H1 (cell line): ENCODE measurements at regions of chr5 and their contacts with region 1.

Region 1: DNA sequence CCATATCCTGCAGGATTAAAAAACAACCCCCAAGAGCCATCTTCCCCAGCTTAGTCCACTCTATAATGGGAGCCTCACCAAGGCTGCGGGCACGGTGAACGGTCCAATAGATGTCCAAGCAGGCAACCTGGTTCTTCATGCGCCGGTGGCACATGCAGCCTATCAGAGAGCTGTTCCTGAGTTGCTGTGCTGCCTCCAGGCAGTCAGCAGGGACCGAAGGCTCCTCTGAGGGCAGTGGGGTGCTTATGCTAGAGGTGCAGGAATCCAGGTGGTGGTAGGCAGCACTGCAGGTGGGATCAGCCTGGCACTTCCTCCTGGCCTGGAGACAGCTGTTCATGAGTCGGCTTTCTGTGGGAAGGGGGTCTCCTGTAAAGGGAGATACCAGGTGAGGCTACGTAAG is 10.2 kb downstream of the GFRA3 start:
- DNase-seq: no peak
- H3K4me3 ChIP-seq: no peak overlapping the region
- H3K27ac ChIP-seq: no peak overlapping the region
- H3K4me1 ChIP-seq: no peaks in the 10 kb centered on the region; a peak in 1 of 7 replicates
- H3K27me3 ChIP-seq: no peaks in the 10 kb centered on the region
- CTCF ChIP-seq: peak in 1 of 3 experiments; percentile 2; a peak in 1 of 4 replicates
- EP300 ChIP-seq: no peak
- POLR2A ChIP-seq: no peak
- RAD21 ChIP-seq: no peak

Region 2: DNA sequence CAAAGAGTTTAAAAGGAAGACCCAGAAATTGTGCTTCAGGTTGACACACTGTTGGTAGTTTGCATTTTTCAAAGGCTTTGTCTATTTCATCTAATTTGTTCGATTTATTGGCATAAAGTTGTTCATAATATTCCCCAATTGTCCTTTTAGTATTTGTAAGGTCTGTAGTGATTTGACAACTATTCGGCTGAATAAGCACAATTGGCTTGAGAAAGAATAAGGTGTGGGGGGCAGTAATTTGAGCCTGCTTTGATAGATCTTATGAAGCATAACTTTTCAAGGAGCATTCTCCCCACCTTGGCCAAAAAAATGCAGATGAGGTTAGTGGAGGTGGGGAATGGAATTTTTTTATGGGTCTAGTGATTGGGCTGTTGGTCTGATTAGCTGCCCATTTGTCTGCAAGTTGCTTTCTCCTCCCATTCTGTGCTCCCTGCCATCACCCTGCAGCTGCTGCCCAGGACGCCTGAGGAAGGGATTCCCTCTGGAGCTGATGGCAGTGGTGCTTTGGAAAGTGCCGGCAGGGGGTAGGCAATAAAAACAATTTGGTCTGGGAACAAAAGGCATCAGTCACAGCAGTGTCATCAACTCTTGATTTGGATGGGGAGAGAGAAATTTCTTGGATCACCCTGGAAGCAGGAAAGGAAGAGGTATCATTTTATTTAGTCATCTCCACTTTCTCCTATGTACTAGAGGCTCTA is 153.8 kb before region 1 on chr5:
- CTCF ChIA-PET with region 1: no interaction called
- POLR2A ChIA-PET with region 1: no interaction called
- DNase-seq: no peak
- H3K4me3 ChIP-seq: no peak overlapping the region
- H3K27ac ChIP-seq: no peak overlapping the region
- H3K4me1 ChIP-seq: peaks cover 0 to 9% (median 5%) of the 10 kb centered on the region in 4 experiments; a peak in 5 of 7 replicates
- H3K27me3 ChIP-seq: no peaks in the 10 kb centered on the region
- CTCF ChIP-seq: no peak
- EP300 ChIP-seq: no peak
- POLR2A ChIP-seq: no peak
- RAD21 ChIP-seq: no peak

Region 3: GRCh38 chr5:138275379-138275782 is 11.2 kb after region 1 on chr5:
- CTCF ChIA-PET with region 1: interaction called, 12 read pairs
- POLR2A ChIA-PET with region 1: interaction called, 3 read pairs
- DNase-seq: no peak
- H3K4me3 ChIP-seq: no peak overlapping the region
- H3K27ac ChIP-seq: no peak overlapping the region
- H3K4me1 ChIP-seq: peaks cover 0 to 11% (median 3%) of the 10 kb centered on the region in 4 experiments; a peak in 4 of 7 replicates
- H3K27me3 ChIP-seq: peaks cover 3 to 28% (median 26%) of the 10 kb centered on the region in 4 experiments
- CTCF ChIP-seq: no peak
- EP300 ChIP-seq: no peak
- POLR2A ChIP-seq: no peak
- RAD21 ChIP-seq: no peak

Region 4: DNA sequence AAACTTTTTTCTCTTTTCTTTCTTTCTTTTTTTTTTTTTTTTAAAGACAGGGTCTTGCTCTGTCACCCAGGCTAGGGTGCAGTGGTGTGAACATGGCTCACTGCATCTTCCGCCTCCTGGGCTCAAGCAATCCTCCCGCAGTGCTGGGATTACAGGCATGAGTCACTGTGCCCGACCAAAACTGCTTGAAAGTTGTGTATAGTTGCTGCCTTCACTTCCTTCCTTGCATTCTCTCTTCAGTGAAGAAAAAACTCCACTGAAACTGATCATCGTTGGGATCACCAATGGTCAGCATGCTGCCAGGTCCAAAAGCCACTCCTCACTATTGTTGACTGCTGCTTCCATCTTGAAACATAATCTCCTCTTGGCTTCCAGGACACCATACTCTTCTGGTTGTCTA is 422.5 kb after region 1 on chr5:
- CTCF ChIA-PET with region 1: no interaction called
- POLR2A ChIA-PET with region 1: no interaction called
- DNase-seq: no peak
- H3K4me3 ChIP-seq: no peak overlapping the region
- H3K27ac ChIP-seq: no peak overlapping the region
- H3K4me1 ChIP-seq: no peaks in the 10 kb centered on the region
- H3K27me3 ChIP-seq: no peaks in the 10 kb centered on the region; a peak in 1 of 7 replicates
- CTCF ChIP-seq: no peak
- EP300 ChIP-seq: no peak
- POLR2A ChIP-seq: no peak
- RAD21 ChIP-seq: no peak